PC-9 (cell line): ENCODE measurements at regions of chr20 and their contacts with region 1.

Region 1: GRCh38 chr20:57388953-57389694 is 2.1 kb upstream of the RBM38 start:
- DNase-seq: peak; percentile 68 to 90
- H3K4me3 ChIP-seq: peak overlapping the region; percentile 58
- H3K27ac ChIP-seq: no peak overlapping the region
- H3K4me1 ChIP-seq: peaks cover 12% of the 10 kb centered on the region
- H3K27me3 ChIP-seq: no peaks in the 10 kb centered on the region
- CTCF ChIP-seq: no peak

Region 2: DNA sequence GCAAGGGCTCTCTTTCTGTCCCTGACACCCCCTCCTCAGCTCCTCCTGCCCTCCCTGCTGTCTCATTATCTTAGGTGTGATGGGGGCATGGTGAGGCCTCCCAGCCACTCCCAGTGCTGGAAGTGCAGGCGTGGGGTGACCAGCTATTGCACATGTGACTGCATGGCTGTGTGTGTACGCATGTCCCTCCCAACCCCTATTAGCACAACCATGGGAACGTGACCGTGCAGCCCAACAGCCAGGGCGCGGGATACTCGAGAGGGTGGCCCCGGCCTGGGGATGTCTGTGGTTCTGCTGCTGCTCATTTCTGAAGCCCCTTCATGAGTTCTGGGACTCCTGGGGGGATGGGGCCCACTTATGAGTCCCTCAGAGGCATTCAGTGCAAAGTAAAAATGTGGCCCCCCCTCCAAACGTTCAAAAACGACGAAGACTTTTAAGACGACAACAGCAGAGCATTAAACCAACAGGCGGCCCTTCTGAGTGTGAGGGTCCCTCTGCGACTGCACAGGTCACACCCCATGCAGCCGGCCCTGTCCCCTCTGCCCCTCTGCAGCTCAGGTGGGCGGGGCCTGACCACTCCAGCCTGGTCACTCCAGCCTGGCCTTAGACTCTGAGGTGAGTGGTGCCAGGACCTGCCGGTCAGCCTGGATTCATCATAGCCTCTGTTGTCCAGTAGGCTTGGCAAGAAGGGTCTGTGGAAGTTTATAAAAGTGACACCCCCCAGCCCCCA is 53.2 kb after region 1 on chr20:
- CTCF ChIA-PET with region 1: no interaction called
- POLR2A ChIA-PET with region 1: no interaction called
- intact Hi-C with region 1: no loop called
- DNase-seq: no peak
- H3K4me3 ChIP-seq: no peak overlapping the region
- H3K27ac ChIP-seq: no peak overlapping the region
- H3K4me1 ChIP-seq: peaks cover 9% of the 10 kb centered on the region; the same call in 1 of the 2 replicates
- H3K27me3 ChIP-seq: peaks cover 32% of the 10 kb centered on the region
- CTCF ChIP-seq: no peak

Region 3: DNA sequence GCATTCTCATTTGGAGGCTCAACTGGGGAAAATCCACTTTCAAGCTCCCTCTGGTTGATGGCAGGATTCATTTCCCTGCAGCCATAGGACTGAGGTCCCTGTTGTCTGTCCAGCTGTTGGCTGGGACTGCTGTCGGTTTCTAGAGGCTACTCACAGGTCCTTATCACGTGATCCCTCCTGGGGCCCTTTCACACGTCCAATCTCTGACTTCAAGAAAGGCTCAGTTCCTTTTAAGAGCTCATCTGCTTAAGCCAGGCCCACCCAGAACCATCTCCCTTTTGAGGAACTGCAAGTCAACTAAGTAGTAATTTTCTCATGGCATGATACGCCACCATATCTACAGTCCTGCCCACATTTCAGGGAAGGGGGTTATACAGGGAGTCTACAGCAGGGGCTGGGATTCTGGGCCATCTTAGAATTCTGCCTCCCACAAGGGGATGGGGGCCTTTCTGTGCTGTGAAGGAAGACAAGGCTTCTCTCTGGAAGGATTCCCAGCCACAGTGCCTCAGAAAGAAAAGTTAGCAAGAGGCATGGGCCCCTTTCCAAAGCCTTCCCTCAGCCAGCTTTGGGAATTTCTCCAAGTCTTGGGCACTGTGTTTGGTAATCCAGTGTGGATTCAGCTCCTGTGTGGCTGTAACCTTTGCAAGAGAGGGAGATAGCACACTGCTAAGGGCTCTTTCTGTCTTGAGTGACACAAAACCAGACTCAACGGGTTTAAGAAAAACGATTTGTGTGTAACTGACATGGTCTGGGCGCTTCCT is 69.5 kb after region 1 on chr20:
- CTCF ChIA-PET with region 1: no interaction called
- POLR2A ChIA-PET with region 1: no interaction called
- intact Hi-C with region 1: no loop called
- DNase-seq: no peak
- H3K4me3 ChIP-seq: no peak overlapping the region
- H3K27ac ChIP-seq: no peak overlapping the region
- H3K4me1 ChIP-seq: no peaks in the 10 kb centered on the region
- H3K27me3 ChIP-seq: peaks cover 75% of the 10 kb centered on the region
- CTCF ChIP-seq: no peak

Region 4: GRCh38 chr20:57638173-57638894 is 249.2 kb after region 1 on chr20:
- CTCF ChIA-PET with region 1: no interaction called
- POLR2A ChIA-PET with region 1: interaction called, 15 read pairs
- intact Hi-C with region 1: no loop called
- DNase-seq: no peak
- H3K4me3 ChIP-seq: no peak overlapping the region
- H3K27ac ChIP-seq: no peak overlapping the region
- H3K4me1 ChIP-seq: peaks cover 6% of the 10 kb centered on the region; the same call in 1 of the 2 replicates
- H3K27me3 ChIP-seq: no peaks in the 10 kb centered on the region
- CTCF ChIP-seq: no peak